PC-9 (cell line): ENCODE measurements at regions of chr1 and their contacts with region 1.

Region 1: GRCh38 chr1:6794164-6794563 is 8.9 kb downstream of the CAMTA1 start:
- DNase-seq: no peak
- H3K4me3 ChIP-seq: no peak overlapping the region
- H3K27ac ChIP-seq: no peak overlapping the region
- H3K4me1 ChIP-seq: no peaks in the 10 kb centered on the region
- H3K27me3 ChIP-seq: no peaks in the 10 kb centered on the region
- CTCF ChIP-seq: peak; percentile 58

Region 2: DNA sequence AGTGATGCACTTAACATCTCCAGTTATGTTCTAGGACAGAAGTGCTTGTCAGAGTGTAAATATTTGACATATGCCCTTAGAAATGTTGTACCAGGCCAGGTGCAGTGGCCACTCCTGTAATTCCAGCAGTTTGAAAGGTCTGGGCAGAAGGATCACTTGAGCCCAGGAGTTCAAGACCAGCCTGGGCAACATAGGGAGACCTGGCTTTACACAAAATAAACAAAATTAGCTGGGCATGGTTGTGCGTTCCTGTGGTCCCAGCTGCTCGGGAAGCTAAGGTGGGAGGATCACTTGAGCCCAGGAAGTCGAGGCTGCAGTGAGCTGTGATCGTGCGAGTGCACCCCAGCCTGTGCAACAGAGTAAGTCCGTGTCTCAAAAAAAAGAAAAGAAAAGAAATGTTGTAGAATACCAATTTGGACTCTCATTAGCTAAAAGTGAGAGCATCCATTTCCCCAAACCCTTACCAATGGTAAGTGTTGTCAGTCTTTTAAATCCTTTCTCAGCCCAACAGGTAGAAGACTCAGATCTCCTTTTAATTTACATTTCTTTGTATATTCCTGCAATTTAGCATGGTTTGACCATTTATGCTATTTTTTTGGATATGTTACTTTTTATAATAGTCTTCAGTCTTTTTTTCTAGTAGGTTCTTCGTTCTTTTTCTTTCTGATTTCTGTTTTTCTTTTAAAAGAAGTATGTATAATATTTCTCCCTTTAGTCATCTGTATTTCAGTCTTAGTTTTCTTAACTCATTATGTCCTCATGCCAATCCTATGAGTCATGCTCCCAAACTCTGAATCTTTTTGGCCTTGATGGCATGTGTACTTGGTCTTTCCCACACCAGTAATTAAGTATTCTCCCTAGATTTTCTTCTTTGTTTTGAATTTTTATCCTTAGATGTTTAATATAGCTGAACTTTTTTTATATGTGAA is 65.5 kb after region 1 on chr1:
- CTCF ChIA-PET with region 1: no interaction called
- POLR2A ChIA-PET with region 1: no interaction called
- intact Hi-C with region 1: loop called (anchors 2 kb)
- DNase-seq: peak; percentile 32 to 88
- H3K4me3 ChIP-seq: no peak overlapping the region
- H3K27ac ChIP-seq: peak overlapping the region; percentile 82
- H3K4me1 ChIP-seq: peaks cover 22% of the 10 kb centered on the region
- H3K27me3 ChIP-seq: no peaks in the 10 kb centered on the region
- CTCF ChIP-seq: no peak

Region 3: DNA sequence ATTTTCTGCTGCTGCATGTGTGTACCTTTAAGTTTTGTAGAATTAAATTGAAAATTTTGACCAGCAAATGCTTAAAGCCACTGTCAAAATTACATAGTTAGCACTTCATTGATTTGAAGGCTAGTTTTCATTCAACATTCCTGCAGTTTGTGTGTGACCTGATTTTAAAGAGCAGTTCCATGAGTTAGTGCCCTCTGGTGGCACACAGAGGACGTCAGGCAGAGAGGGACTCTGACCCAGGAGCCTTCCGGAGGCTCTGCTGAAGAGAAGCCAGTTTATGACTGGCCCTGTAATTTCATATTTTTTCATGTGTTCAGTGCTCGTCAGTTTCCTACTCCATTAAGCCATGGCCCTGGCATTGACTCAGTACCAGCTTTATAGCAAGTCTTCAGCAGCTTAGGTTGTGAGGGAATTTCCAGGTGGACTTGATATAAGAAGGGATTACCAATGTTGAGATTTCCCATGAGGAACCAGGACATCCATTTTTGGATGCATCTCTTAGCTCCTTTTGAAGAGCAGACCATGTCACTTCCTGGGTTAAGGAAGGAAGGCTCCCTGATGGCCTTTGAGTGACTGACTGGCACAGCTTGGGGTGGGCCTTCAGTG is 95.8 kb after region 1 on chr1:
- CTCF ChIA-PET with region 1: no interaction called
- POLR2A ChIA-PET with region 1: no interaction called
- intact Hi-C with region 1: loop called (anchors 2 kb)
- DNase-seq: peak in 1 of 2 experiments; percentile 31
- H3K4me3 ChIP-seq: no peak overlapping the region
- H3K27ac ChIP-seq: no peak overlapping the region
- H3K4me1 ChIP-seq: no peaks in the 10 kb centered on the region
- H3K27me3 ChIP-seq: no peaks in the 10 kb centered on the region
- CTCF ChIP-seq: peak; percentile 69

Region 4: DNA sequence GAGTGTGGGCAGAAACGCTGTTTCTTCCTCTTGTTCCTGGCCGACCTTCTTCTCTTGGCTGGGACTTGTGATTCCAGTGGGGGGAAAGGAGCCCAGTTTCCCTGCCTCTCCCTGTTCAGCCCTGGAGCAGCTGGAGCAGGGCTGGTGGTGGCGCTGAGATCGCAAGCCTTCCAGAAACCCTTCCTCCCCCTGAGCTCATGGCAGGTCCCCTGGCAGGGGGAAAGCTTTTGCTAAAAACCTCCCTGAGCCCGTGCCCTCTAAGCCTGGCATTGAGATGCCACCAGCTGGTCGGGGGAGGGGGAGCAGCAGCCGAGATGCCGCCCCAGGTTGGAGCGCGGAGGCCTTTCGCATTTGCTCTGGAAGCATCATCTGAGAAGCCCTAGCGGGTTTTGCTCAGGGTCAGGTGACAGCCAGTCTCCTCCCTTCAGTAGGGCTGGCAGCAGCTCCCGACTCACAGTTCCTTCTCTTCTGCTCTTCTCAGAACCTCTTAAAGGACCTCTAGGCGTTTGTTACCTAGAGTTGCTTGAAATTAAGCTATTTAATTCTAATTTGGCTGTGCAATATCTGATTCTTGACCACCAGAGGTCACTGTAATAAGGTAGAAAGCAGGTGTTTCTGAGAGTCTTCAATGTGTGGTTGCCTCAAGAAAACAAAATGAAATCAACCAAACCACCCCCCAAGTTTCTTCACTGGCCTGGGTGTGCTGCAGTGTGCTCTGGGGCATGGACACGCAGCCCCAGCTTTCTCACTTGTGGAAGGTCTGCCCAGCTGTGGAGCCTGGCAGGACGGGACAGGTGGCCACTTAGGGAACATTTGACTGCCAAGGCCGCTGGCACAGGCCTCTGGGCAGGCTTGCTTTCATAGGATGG is 248.4 kb after region 1 on chr1:
- CTCF ChIA-PET with region 1: no interaction called
- POLR2A ChIA-PET with region 1: no interaction called
- intact Hi-C with region 1: loop called (anchors 10 kb)
- DNase-seq: no peak
- H3K4me3 ChIP-seq: no peak overlapping the region
- H3K27ac ChIP-seq: no peak overlapping the region
- H3K4me1 ChIP-seq: no peaks in the 10 kb centered on the region
- H3K27me3 ChIP-seq: peaks cover 32% of the 10 kb centered on the region
- CTCF ChIP-seq: peak; percentile 65

Region 5: DNA sequence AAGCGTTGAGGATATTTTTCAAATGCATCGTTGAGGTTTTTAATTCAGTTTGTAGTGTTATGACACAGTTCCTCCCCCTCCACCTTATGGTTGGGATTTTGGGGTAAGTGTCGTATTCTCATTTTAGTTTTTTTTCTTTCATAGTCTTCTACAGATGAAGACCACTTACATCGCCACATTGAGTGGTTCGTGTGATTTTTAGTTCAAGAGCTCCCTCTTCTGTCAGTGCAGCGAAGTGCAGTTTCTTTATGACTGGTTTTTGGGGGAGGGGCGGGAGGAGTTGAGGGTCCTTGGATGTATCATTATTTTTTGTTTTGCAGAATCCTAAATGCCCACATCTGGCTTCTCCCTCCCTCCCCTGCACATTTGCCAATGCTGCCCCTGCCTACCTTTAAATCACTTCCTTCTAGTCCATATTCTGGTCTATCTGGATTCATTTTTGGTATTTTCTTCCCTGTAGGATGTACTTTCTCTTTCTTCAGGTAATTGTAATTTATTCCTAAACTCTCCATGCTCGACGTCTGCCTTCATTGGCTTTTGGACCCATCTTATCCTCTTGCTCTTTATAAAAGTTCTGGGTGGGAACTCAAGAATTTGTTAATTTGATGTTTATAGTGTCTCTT is 424.2 kb after region 1 on chr1:
- CTCF ChIA-PET with region 1: no interaction called
- POLR2A ChIA-PET with region 1: no interaction called
- intact Hi-C with region 1: loop called (anchors 5 kb)
- DNase-seq: peak; percentile 28 to 36
- H3K4me3 ChIP-seq: no peak overlapping the region
- H3K27ac ChIP-seq: no peak overlapping the region
- H3K4me1 ChIP-seq: no peaks in the 10 kb centered on the region
- H3K27me3 ChIP-seq: peaks cover 22% of the 10 kb centered on the region
- CTCF ChIP-seq: peak; percentile 81

Region 6: GRCh38 chr1:7646981-7647901 is 853.1 kb after region 1 on chr1:
- CTCF ChIA-PET with region 1: no interaction called
- POLR2A ChIA-PET with region 1: no interaction called
- intact Hi-C with region 1: loop called (anchors 5 kb)
- DNase-seq: peak in 1 of 2 experiments; percentile 62
- H3K4me3 ChIP-seq: no peak overlapping the region
- H3K27ac ChIP-seq: no peak overlapping the region
- H3K4me1 ChIP-seq: no peaks in the 10 kb centered on the region
- H3K27me3 ChIP-seq: peaks cover 54% of the 10 kb centered on the region
- CTCF ChIP-seq: peak; percentile 86